ENCODE measurements at regions of chr9 and their contacts with region 1.

Region 1: GRCh38 chr9:16133556-16134227 is 580.8 kb downstream of the CCDC171 start:
- DNase-seq: peak in 1 of 2 donors; percentile 32
- ATAC-seq: peak; percentile 59 to 96 (median 75)
- H3K4me3 ChIP-seq: no peak overlapping the region
- H3K4me3 Mint-ChIP-seq: no peak overlapping the region
- H3K27ac ChIP-seq: no peak overlapping the region
- H3K27ac Mint-ChIP-seq: no peak overlapping the region
- H3K4me1 ChIP-seq: no peaks in the 10 kb centered on the region
- H3K4me1 Mint-ChIP-seq: peaks cover 10 to 14% of the 10 kb centered on the region in 2 donors
- H3K27me3 ChIP-seq: no peaks in the 10 kb centered on the region
- H3K27me3 Mint-ChIP-seq: peaks cover 3 to 31% of the 10 kb centered on the region in 2 donors
- CTCF ChIP-seq: peak; percentile 59

Region 2: GRCh38 chr9:15873569-15874177 is 260.0 kb before region 1 on chr9:
- intact Hi-C with region 1: loop called (anchors 1 kb)
- DNase-seq: peak in 1 of 2 donors; percentile 45
- ATAC-seq: peak in 1 of 3 donors; percentile 53
- H3K4me3 ChIP-seq: no peak overlapping the region
- H3K4me3 Mint-ChIP-seq: no peak overlapping the region
- H3K27ac ChIP-seq: no peak overlapping the region
- H3K27ac Mint-ChIP-seq: no peak overlapping the region
- H3K4me1 ChIP-seq: no peaks in the 10 kb centered on the region
- H3K4me1 Mint-ChIP-seq: no peaks in the 10 kb centered on the region
- H3K27me3 ChIP-seq: no peaks in the 10 kb centered on the region
- H3K27me3 Mint-ChIP-seq: no peaks in the 10 kb centered on the region
- CTCF ChIP-seq: peak; percentile 78

Region 3: DNA sequence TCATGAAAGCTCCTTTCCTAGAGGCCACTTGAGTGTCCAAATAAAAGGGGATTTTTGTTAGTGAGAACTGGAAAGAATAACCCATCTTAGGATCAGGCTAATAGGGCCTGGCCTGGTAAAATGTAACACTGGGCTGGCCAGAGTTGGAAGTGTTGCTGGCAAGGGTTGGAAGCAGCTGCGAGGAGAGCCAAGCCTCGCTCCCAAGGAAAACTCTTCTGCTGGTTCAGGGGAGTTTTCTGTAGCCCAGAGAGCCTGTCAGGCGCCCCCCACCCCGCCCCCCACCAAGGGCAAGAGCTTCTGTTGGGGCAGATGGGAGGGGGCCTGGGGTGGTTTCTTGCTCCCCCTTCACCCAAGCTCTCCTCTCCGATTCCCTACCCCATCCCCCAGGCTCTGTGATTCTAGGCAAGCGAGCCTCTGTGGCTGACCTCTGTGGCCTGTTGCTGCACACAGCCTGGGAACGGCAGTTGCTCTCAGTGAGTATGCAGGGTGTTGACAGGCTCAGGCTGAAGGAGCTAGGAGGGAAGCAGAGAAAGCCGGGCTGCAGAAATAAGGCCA is 33.1 kb before region 1 on chr9:
- intact Hi-C with region 1: no loop called
- DNase-seq: no peak
- ATAC-seq: no peak
- H3K4me3 ChIP-seq: no peak overlapping the region
- H3K4me3 Mint-ChIP-seq: no peak overlapping the region
- H3K27ac ChIP-seq: no peak overlapping the region
- H3K27ac Mint-ChIP-seq: no peak overlapping the region
- H3K4me1 ChIP-seq: no peaks in the 10 kb centered on the region
- H3K4me1 Mint-ChIP-seq: no peaks in the 10 kb centered on the region
- H3K27me3 ChIP-seq: no peaks in the 10 kb centered on the region
- H3K27me3 Mint-ChIP-seq: peaks cover 0 to 2% of the 10 kb centered on the region in 2 donors
- CTCF ChIP-seq: no peak